Mammary epithelial cell (primary cell): ENCODE measurements at regions of chr6 and their contacts with region 1.

Region 1: DNA sequence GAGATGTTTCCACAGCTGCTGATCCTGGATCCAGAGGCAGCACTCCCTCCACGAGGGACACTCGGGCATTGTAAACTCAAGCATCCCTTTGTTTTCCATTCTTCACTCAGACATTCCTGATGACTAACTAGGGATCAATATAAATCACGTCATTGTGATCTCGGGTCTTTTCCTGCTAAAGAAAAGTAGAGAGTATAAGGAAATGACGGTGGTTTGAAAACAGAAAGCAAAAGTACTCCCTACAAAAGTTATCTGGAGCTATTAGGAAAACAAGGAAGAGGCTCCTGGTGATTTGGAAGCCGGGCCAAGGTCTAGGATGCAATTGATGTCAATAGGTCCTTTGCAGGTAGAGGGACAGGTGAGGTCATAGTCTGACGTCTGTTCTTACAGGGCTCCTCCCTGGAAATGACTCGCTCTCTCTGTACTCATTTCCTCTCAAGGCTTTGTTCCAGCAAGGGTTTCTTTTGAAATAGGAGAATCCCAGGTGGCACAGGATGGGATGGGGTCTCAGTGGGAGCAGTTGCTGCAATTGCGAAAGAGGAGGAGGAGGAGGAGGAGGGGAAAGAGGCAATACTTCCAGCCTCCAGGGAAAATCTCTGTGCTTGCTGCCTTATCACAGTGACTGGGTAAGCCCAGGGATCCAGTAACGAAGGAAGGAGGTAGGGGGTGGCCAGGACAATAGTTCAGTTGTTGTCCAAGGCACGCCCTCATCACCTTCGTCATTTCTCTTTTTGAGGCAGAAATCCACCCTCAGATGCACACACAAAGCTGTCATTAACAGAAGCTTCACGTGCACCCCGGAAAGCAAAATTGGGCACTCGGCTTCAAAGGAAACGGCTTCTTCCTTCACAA is 222.9 kb downstream of the LY86 start:
- DNase-seq: peak; percentile 99
- H3K4me3 ChIP-seq: peak overlapping the region; percentile 6 to 22 (median 14)
- H3K27ac ChIP-seq: peak overlapping the region; percentile 99
- H3K4me1 ChIP-seq: peaks cover 18% of the 10 kb centered on the region
- H3K27me3 ChIP-seq: no peaks in the 10 kb centered on the region
- CTCF ChIP-seq: no peak

Region 2: GRCh38 chr6:6758915-6759654 is 52.3 kb before region 1 on chr6:
- CTCF ChIA-PET with region 1: no interaction called
- dilution Hi-C with region 1: no loop called
- in situ Hi-C with region 1: no loop called
- intact Hi-C with region 1: no loop called
- DNase-seq: peak; percentile 23
- H3K4me3 ChIP-seq: no peak overlapping the region
- H3K27ac ChIP-seq: no peak overlapping the region
- H3K4me1 ChIP-seq: no peaks in the 10 kb centered on the region
- H3K27me3 ChIP-seq: no peaks in the 10 kb centered on the region
- CTCF ChIP-seq: peak; percentile 48 to 54

Region 3: GRCh38 chr6:6918216-6918983 is 107.0 kb after region 1 on chr6:
- CTCF ChIA-PET with region 1: no interaction called
- dilution Hi-C with region 1: no loop called
- in situ Hi-C with region 1: no loop called
- intact Hi-C with region 1: loop called (anchors 5 kb)
- DNase-seq: peak; percentile 71
- H3K4me3 ChIP-seq: no peak overlapping the region
- H3K27ac ChIP-seq: no peak overlapping the region
- H3K4me1 ChIP-seq: peaks cover 13% of the 10 kb centered on the region
- H3K27me3 ChIP-seq: no peaks in the 10 kb centered on the region
- CTCF ChIP-seq: no peak